Left cardiac atrium (tissue), 4 donors: ENCODE measurements at regions of chr1 and their contacts with region 1.

Region 1: DNA sequence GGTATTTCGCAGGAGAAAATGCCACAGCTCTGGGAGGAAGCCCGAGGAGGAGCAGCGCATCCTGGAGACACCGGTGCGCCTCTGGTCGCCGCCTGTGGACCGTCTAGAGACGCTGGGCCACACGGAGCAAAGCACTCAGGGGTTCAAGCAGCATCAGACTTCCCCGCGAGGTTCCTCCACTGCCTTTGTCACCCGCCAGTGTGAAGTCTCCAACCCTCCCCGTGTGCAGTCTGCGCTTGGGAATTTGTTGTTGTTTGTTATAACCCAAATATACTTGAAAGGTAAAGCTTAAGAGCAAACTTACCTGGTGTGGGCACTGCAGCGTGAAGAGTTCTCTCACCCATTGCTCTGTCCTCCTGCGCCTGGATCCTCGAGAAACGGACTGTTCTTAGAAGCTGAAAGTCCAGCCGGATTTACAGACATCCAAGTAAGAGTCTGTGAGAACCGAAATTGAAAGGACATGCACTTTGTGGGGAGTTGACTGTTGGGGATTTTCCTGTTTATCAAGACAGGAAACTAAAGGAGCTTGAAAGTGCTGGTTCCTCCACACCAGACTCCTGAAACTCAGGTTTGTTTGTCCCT is at the start of gene GBP4:
- DNase-seq: peak; percentile 48
- ATAC-seq: peak; percentile 76 to 77
- total RNA-seq, gene GBP4: 6.2 to 7.1 TPM

Region 2: GRCh38 chr1:89261926-89262515 is 63.4 kb after region 1 on chr1:
- intact Hi-C with region 1: loop called in 1 of 2 experiments (anchors 10 kb)
- DNase-seq: no peak
- ATAC-seq: peak in 1 of 2 donors; percentile 72

Region 3: DNA sequence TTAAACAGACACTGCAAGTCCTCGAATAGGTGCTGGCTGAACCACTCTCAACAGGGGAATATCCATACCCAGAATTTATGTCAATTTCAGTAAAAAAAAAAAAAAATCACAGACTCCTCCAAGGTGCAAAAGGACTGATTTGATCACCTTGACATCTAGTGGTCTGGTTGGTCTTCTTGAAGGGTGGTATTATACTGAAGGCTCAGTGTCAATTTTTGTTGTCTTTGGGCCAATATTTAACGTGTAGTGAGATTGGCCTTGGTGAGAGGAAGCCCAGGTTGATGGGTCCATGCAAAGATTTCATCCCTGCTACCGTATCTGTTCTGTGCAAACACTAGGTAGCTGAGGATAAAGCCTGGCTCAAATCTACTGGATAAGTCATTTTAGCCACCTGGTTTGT is 78.1 kb after region 1 on chr1:
- intact Hi-C with region 1: no loop called
- DNase-seq: no peak
- ATAC-seq: no peak